OCI-LY7 (cell line): ENCODE measurements at regions of chr13 and their contacts with region 1.

Region 1: DNA sequence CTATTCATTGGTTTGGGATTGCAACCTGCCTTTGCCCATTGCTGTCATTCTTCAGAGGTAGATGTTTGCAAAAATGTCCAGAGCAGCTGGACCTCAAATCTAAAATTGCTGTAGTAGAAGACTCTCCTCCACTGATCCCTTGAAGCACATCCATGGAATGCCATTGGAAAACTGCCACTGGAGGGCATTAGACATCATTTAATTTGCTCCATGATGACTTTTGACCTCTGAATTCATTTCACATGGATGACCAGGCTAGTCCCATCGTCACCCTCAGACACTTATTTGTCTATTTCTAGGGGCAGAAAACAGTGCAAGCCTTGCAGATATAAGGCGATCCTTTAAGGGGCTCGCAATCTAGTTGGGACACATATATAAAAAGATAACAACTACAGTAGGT is 33.9 kb upstream of the FLT1 start:
- DNase-seq: no peak
- H3K4me3 ChIP-seq: no peak overlapping the region
- H3K27ac ChIP-seq: no peak overlapping the region
- H3K4me1 ChIP-seq: peaks cover 23% of the 10 kb centered on the region
- CTCF ChIP-seq: no peak

Region 2: DNA sequence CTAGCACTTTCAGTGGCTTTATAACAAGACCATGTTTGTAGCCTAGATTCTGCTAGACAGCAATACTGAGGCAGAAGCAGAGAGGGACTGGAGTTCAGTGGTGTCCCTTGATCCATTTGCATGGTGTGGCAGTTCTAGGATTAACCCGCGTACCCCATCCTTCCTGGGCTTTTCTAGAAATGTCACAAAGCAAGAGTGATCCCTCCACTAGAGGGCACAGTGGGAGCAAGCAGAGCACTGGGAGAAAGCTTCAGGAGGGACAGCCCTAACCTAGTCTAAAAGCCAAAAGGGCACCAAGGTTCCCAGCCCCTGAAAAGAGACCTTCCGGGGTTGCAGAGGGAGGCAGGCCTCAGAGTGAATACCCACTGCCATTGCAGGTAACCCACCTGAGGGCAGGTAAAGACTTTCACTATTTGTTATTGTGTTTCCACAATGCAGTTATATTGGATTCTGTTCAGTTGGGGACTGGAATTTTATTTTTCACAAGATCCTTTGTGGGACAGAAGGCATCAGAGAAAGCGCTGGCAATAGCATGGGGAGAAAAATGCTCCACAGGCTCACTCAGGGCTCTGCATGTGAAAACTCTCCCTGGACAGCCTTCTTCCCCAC is 204.6 kb before region 1 on chr13:
- CTCF ChIA-PET with region 1: no interaction called
- POLR2A ChIA-PET with region 1: no interaction called
- intact Hi-C with region 1: loop called (anchors 10 kb)
- DNase-seq: peak; percentile 76
- H3K4me3 ChIP-seq: no peak overlapping the region
- H3K27ac ChIP-seq: no peak overlapping the region
- H3K4me1 ChIP-seq: no peaks in the 10 kb centered on the region
- CTCF ChIP-seq: peak; percentile 87

Region 3: GRCh38 chr13:28725046-28725445 is 196.2 kb after region 1 on chr13:
- CTCF ChIA-PET with region 1: no interaction called
- POLR2A ChIA-PET with region 1: no interaction called
- intact Hi-C with region 1: no loop called
- DNase-seq: no peak
- H3K4me3 ChIP-seq: no peak overlapping the region
- H3K27ac ChIP-seq: no peak overlapping the region
- H3K4me1 ChIP-seq: no peaks in the 10 kb centered on the region
- CTCF ChIP-seq: no peak